ENCODE measurements at regions of chr9 and their contacts with region 1.

Region 1: GRCh38 chr9:137618105-137619067 is at the start of gene EHMT1:
- DNase-seq: peak; percentile 82 to 97 (median 89)
- ATAC-seq: peak; percentile 85
- H3K4me3 ChIP-seq: peak within 1 kb of the TSS; percentile 94 to 97
- H3K4me3 Mint-ChIP-seq: peak within 1 kb of the TSS; percentile 92
- H3K27ac ChIP-seq: peak within 1 kb of the TSS; percentile 82 to 97
- H3K27ac Mint-ChIP-seq: peak within 1 kb of the TSS; percentile 94
- H3K4me1 ChIP-seq: peaks cover 30% of the 10 kb centered on the region
- H3K4me1 Mint-ChIP-seq: peaks cover 42% of the 10 kb centered on the region
- H3K27me3 ChIP-seq: no peaks in the 10 kb centered on the region
- H3K27me3 Mint-ChIP-seq: no peaks in the 10 kb centered on the region
- CTCF ChIP-seq: no peak
- total RNA-seq, gene EHMT1: 83.1 to 86.2 TPM

Region 2: GRCh38 chr9:137578518-137579258 is 39.7 kb before region 1 on chr9 and contains the start of gene DPH7:
- CTCF ChIA-PET with region 1: interaction called, 3 read pairs
- POLR2A ChIA-PET with region 1: interaction called, 8 read pairs
- intact Hi-C with region 1: loop called (anchors 1 to 2 kb)
- DNase-seq: peak; percentile 91 to 98 (median 96)
- ATAC-seq: peak; percentile 96
- H3K4me3 ChIP-seq: peak within 1 kb of the TSS; percentile 58 to 95
- H3K4me3 Mint-ChIP-seq: peak within 1 kb of the TSS; percentile 81
- H3K27ac ChIP-seq: peak within 1 kb of the TSS; percentile 36 to 57
- H3K27ac Mint-ChIP-seq: peak within 1 kb of the TSS; percentile 67
- H3K4me1 ChIP-seq: peaks cover 24% of the 10 kb centered on the region
- H3K4me1 Mint-ChIP-seq: peaks cover 27% of the 10 kb centered on the region
- H3K27me3 ChIP-seq: no peaks in the 10 kb centered on the region
- H3K27me3 Mint-ChIP-seq: no peaks in the 10 kb centered on the region
- CTCF ChIP-seq: peak; percentile 79
- total RNA-seq, gene DPH7: 47.0 to 49.8 TPM

Region 3: DNA sequence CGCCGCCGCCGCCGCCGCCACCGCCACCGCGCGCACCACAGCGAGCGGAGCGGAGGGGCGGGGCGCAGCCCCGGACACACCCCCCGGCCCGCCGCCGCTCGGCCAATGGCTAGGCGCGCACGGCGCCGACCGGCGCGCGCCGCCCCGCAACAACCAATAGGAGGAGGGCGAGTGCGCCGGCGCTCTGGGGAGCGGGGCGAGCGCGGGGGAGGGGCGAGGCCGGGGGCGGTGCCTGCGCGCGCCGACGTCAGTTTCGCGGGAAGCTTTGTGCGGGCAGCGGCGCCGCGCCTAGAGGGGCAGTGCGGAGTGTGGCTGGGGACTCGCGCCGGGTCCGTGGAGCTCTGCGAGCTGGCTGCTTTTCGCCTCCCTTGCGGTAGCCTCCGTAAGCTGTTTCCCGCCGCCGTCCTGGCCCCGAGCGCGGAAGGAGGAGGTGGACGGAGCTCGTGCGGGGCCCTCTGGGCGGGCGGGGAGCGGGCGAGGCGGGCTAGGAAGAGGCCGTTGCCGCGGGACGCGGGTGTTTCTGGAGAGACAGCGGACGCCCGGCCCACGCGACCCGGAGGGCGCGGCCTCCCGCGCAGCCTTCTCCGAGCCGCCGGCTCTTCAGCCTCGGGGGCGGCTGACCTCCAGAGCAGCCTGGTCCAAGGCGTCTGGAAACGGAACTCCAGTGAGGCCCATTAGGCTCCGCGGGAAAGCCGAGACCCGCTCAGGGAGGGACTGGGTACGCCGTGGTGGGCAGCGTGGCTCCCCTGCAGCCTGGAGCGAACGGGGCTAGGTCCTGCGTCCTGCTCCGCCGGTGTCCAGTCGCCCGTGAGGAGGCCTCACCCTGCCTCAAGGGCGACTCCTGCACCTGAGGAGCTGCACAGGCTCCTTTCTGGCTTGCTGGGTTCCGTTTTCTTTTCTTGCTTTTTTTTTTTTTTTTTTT is 27.7 kb before region 1 on chr9 and contains the start of gene ZMYND19:
- CTCF ChIA-PET with region 1: no interaction called
- POLR2A ChIA-PET with region 1: interaction called, 3 read pairs
- intact Hi-C with region 1: loop called (anchors 1 kb)
- DNase-seq: peak; percentile 78 to 95 (median 90)
- ATAC-seq: peak; percentile 98
- H3K4me3 ChIP-seq: peak within 1 kb of the TSS; percentile 61 to 63
- H3K4me3 Mint-ChIP-seq: peak within 1 kb of the TSS; percentile 93
- H3K27ac ChIP-seq: peak within 1 kb of the TSS in 1 of 2 experiments; percentile 56
- H3K27ac Mint-ChIP-seq: peak within 1 kb of the TSS; percentile 90
- H3K4me1 ChIP-seq: peaks cover 15% of the 10 kb centered on the region
- H3K4me1 Mint-ChIP-seq: peaks cover 12% of the 10 kb centered on the region
- H3K27me3 ChIP-seq: no peaks in the 10 kb centered on the region
- H3K27me3 Mint-ChIP-seq: no peaks in the 10 kb centered on the region
- CTCF ChIP-seq: no peak
- total RNA-seq, gene ZMYND19: 9.0 to 10.3 TPM

Region 4: DNA sequence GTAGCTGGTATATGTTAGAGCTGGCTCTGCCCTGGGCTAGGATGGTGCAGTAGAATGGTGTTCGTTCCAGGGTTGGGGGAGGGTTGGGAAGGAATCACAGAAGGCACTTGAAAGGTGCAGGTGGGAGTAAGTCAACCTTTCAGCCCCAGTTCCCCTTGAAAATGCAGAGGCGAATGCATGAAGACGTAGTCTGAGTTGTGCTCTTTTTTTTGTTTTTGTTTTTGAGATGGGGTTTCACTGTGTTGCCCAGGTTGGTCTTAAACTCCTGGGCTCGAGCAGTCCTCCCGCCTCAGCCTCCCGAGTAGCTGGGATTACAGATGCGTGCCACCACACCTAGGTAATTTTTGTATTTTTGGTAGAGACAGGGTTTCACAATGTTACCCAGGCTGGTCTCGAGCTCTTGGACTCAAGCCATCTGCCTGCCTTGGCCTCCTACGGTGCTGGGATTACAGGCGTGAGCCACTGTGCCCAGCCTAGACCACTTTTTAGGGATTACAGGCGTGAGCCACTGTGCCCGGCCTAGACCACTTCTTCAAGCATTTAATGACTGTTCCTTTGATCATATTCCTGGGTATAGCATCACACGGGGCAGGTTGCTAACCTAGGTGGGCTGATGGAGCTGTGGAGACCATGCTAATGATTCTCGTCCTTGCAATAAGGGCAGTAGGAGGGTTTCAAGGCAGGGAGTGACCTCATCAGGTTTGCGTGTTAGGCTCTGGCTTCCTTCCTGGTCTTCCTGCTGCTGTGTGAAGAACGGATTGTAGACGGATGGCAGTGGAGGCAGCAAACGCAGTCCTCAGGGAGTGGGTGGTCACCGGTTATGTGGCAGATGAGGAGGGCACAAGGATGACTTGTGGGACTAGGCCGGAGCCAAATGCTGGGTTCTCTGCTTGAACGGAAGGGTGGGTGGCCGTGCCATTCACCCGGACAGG is 14.1 kb after region 1 on chr9:
- CTCF ChIA-PET with region 1: interaction called, 3 read pairs
- POLR2A ChIA-PET with region 1: interaction called, 16 read pairs
- intact Hi-C with region 1: loop called in 1 of 2 experiments (anchors 1 kb)
- DNase-seq: no peak
- ATAC-seq: no peak
- H3K4me3 ChIP-seq: no peak overlapping the region
- H3K4me3 Mint-ChIP-seq: no peak overlapping the region
- H3K27ac ChIP-seq: no peak overlapping the region
- H3K27ac Mint-ChIP-seq: peak overlapping the region; percentile 14
- H3K4me1 ChIP-seq: peaks cover 51% of the 10 kb centered on the region
- H3K4me1 Mint-ChIP-seq: peaks cover 67% of the 10 kb centered on the region
- H3K27me3 ChIP-seq: no peaks in the 10 kb centered on the region
- H3K27me3 Mint-ChIP-seq: no peaks in the 10 kb centered on the region
- CTCF ChIP-seq: no peak

Region 5: GRCh38 chr9:137731216-137731946 is 113.0 kb after region 1 on chr9:
- CTCF ChIA-PET with region 1: no interaction called
- POLR2A ChIA-PET with region 1: no interaction called
- intact Hi-C with region 1: no loop called
- DNase-seq: no peak
- ATAC-seq: no peak
- H3K4me3 ChIP-seq: no peak overlapping the region
- H3K4me3 Mint-ChIP-seq: no peak overlapping the region
- H3K27ac ChIP-seq: no peak overlapping the region
- H3K27ac Mint-ChIP-seq: no peak overlapping the region
- H3K4me1 ChIP-seq: no peaks in the 10 kb centered on the region
- H3K4me1 Mint-ChIP-seq: peaks cover 17% of the 10 kb centered on the region
- H3K27me3 ChIP-seq: no peaks in the 10 kb centered on the region
- H3K27me3 Mint-ChIP-seq: no peaks in the 10 kb centered on the region
- CTCF ChIP-seq: no peak

Region 6: GRCh38 chr9:137907776-137908175 is 289.4 kb after region 1 on chr9:
- CTCF ChIA-PET with region 1: no interaction called
- POLR2A ChIA-PET with region 1: no interaction called
- intact Hi-C with region 1: no loop called
- DNase-seq: no peak
- ATAC-seq: no peak
- H3K4me3 ChIP-seq: no peak overlapping the region
- H3K4me3 Mint-ChIP-seq: no peak overlapping the region
- H3K27ac ChIP-seq: no peak overlapping the region
- H3K27ac Mint-ChIP-seq: no peak overlapping the region
- H3K4me1 ChIP-seq: no peaks in the 10 kb centered on the region
- H3K4me1 Mint-ChIP-seq: no peaks in the 10 kb centered on the region
- H3K27me3 ChIP-seq: peaks cover 0 to 2% of the 10 kb centered on the region in 2 experiments
- H3K27me3 Mint-ChIP-seq: peaks cover 32% of the 10 kb centered on the region
- CTCF ChIP-seq: no peak

Measured in CD8-positive, alpha-beta T cell (primary cell).